Left lung (tissue), 14 donors: ENCODE measurements at regions of chr3 and their contacts with region 1.

Region 1: DNA sequence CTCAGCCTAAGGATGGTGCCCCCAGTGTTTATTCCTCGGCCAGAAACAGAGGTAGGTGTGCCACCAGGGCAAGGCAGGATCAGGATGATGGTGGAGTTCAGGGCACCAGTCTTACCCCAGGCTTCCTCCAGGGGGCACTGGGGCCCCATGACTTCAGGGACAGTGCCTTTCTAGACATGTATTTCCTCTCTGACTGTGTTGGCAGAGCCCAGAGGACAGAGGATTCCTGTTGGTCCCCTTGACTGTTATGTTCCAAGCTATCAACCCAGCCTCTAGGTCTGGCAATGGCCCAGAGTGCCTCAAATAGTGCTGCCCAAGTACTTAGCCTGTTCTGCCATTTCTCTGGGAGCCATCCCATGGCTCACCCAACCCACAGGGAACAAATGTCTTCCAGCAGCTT is 2.8 kb downstream of the HEMK1 start:
- DNase-seq: peak; percentile 64 to 91 (median 79)
- ATAC-seq: peak; percentile 43
- H3K4me3 ChIP-seq: no peak overlapping the region
- H3K27ac ChIP-seq: peak overlapping the region; percentile 27 to 61
- H3K4me1 ChIP-seq: peaks cover 11 to 74% of the 10 kb centered on the region in 2 donors
- H3K27me3 ChIP-seq: no peaks in the 10 kb centered on the region
- CTCF ChIP-seq: peak; percentile 85 to 97

Region 2: GRCh38 chr3:50337191-50337841 is 234.8 kb before region 1 on chr3:
- intact Hi-C with region 1: no loop called
- DNase-seq: peak; percentile 97 to 100 (median 100)
- ATAC-seq: peak; percentile 86
- H3K4me3 ChIP-seq: peak overlapping the region; percentile 51 to 81
- H3K27ac ChIP-seq: peak overlapping the region; percentile 94 to 98
- H3K4me1 ChIP-seq: peaks cover 36 to 89% of the 10 kb centered on the region in 2 donors
- H3K27me3 ChIP-seq: no peaks in the 10 kb centered on the region
- CTCF ChIP-seq: no peak

Region 3: DNA sequence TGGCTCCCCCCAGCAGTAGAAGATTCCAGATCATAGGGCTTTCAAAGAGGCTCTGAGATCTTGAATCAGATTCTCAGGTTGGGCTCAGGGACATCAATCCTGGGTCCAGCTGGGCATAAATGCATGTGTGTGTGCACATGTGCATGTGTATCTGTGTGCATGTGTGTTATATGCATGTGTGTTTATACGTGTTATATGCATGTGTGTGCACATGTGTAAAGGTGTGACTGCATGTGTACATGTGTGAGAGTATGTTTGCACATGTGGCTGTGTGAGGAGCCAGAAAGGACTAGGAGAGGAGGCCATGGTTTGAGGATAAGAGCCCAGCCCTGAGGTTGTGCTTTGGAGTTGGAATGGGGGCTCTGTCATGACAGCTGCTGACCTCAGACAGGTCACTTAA is 43.0 kb after region 1 on chr3:
- intact Hi-C with region 1: loop called in 1 of 2 experiments (anchors 2 kb)
- DNase-seq: no peak
- ATAC-seq: no peak
- H3K4me3 ChIP-seq: no peak overlapping the region
- H3K27ac ChIP-seq: no peak overlapping the region
- H3K4me1 ChIP-seq: peaks cover 20 to 62% of the 10 kb centered on the region in 2 donors
- H3K27me3 ChIP-seq: no peaks in the 10 kb centered on the region
- CTCF ChIP-seq: no peak